GM18951 (cell line): ENCODE measurements at regions of chr7 and their contacts with region 1.

Region 1: DNA sequence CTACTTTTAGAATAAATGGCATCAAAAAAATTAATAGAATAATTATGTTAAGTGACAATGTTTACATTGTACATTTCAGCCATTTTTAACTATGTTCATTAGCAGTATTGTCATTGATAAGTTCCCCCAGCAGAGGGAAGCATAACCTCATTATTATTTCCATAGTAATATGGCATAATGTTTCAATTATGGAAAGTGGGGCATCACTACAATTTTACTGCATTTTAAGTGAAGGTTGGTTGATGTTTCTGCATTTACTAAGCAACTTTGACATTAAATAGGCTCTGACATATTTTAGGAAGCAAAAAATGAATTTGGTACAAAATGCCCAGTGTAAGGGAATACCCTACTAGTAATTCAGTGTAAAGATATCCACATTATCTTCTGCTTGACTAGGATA is 218.3 kb downstream of the SEMA3A start:
- POLR2A ChIP-seq: no peak

Region 2: GRCh38 chr7:84317536-84317935 is 341.2 kb after region 1 on chr7:
- in situ Hi-C with region 1: no loop called
- POLR2A ChIP-seq: no peak

Region 3: GRCh38 chr7:85023045-85023712 is 1046.9 kb after region 1 on chr7:
- in situ Hi-C with region 1: loop called (anchors 10 kb)
- POLR2A ChIP-seq: no peak